SK-N-SH (cell line): ENCODE measurements at regions of chr1 and their contacts with region 1.

Region 1: GRCh38 chr1:25232027-25232865 is at the start of gene SYF2:
- DNase-seq: peak; percentile 93
- H3K4me3 ChIP-seq: peak within 1 kb of the TSS; percentile 88 to 99
- H3K27ac ChIP-seq: peak within 1 kb of the TSS; percentile 89 to 93
- H3K4me1 ChIP-seq: peaks cover 0 to 11% of the 10 kb centered on the region in 2 experiments; a peak in 3 of 4 replicates
- H3K27me3 ChIP-seq: no peaks in the 10 kb centered on the region
- CTCF ChIP-seq: no peak
- EP300 ChIP-seq: no peak
- RAD21 ChIP-seq: no peak
- polyA plus RNA-seq, gene SYF2: 31.1 and 32.3 TPM in 2 replicates

Region 2: DNA sequence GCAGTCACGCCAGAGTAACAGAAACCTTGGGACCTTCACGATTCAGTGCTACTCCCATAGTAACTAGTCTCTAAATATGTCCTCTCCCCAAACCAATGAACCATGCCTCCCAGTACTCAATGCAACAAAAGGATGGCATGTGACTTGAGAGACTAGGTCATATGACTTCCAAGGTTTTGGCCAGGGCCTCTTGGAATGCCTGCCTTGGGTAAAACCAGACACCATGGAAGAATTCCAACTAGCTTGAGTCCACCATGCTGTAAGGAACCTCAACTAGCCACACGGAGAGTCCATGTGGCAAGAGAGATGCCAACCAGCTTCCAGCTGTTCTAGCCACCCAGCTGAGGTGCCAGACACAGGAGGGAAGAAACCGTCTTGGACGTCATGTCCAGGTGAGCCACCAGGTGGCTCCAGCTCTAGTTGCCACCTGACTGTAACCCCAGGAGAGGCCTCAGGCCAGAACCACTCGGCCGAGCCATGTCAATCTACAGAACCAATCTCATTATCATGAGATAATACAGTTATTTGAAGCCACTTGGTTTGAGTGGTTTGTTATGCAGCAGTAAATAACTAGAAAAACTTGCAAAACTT is 114.9 kb before region 1 on chr1:
- CTCF ChIA-PET with region 1: no interaction called
- POLR2A ChIA-PET with region 1: no interaction called
- DNase-seq: no peak
- H3K4me3 ChIP-seq: no peak overlapping the region
- H3K27ac ChIP-seq: no peak overlapping the region
- H3K4me1 ChIP-seq: no peaks in the 10 kb centered on the region
- H3K27me3 ChIP-seq: no peaks in the 10 kb centered on the region
- CTCF ChIP-seq: peak; percentile 32
- EP300 ChIP-seq: no peak
- RAD21 ChIP-seq: no peak

Region 3: GRCh38 chr1:25247024-25247828 is 15.0 kb after region 1 on chr1 and contains the start of gene RSRP1:
- CTCF ChIA-PET with region 1: interaction called, 9 read pairs
- POLR2A ChIA-PET with region 1: interaction called, 24 read pairs
- DNase-seq: peak; percentile 99
- H3K4me3 ChIP-seq: peak within 1 kb of the TSS; percentile 86 to 96
- H3K27ac ChIP-seq: peak within 1 kb of the TSS; percentile 98 to 99
- H3K4me1 ChIP-seq: peaks cover 11 to 20% of the 10 kb centered on the region in 2 experiments; a peak in 3 of 4 replicates
- H3K27me3 ChIP-seq: no peaks in the 10 kb centered on the region
- CTCF ChIP-seq: no peak
- EP300 ChIP-seq: no peak
- RAD21 ChIP-seq: no peak
- polyA plus RNA-seq, gene RSRP1: 126 and 191 TPM in 2 replicates